ENCODE measurements at regions of chr16 and their contacts with region 1.

Region 1: DNA sequence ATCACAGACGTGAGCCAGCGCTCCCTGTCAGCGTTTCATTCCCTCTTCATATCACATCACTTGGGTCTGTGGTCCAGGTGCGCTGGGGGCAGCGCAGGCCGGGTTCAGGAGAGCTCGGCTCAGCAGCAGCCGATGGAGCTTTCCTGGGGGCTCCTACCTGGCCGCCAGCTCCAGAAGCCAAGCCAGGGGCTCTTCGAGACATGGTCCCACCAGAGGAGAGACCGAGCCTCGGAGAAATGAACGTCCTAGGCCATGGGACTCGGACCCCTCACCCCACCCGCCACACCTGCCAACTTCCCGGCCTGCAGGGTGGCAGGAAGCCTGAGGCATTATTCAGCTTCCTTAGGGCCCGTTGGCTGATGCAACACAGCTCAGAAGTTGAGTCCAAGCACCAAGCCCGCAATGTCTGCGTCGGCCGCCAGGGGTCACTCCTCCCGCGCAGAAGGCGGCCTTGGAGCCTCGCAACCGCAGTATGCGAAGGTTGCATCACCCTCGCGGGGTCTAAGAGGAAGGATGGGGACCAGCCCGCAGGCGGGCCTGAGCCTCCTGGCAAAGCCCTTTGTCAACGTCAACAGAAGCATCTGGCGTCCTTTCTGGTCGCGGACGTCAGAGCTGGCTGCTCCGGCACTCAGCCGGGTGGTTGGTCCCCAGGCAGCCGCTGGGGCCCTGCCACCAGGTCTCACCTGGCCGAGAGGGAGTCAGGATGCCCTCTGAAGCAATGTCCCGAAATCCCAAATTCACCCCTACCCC is 13.2 kb upstream of the KLHDC4 start:
- DNase-seq: peak; percentile 74 to 96 (median 90)

Region 2: GRCh38 chr16:87874639-87875465 is 95.8 kb after region 1 on chr16:
- intact Hi-C with region 1: loop called (anchors 2 kb)
- DNase-seq: no peak

Region 3: GRCh38 chr16:87956365-87957231 is 177.6 kb after region 1 on chr16:
- intact Hi-C with region 1: no loop called
- DNase-seq: peak in 9 of 42 donors; percentile 21 to 49 (median 36)

Measured in head of caudate nucleus (tissue), 42 donors.